Heart left ventricle (tissue), 16 donors: ENCODE measurements at regions of chr1 and their contacts with region 1.

Region 1: DNA sequence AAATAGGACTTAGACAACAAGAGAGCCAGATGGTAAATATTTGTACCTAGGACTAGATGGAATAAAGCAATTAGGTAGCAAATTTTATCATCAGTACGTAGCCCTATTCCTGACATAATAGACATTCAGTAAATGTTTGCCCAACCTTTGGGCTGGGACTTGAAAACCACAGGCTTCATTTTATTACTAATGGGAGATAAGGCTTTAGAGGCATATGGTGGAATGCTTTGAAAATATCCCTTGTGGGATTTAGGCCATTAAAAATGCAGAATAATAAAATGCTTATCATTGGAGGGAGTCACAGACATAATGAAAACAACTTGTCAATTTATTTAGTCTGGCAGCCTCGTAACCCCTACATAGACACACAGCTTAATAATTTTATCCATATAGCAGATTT is 296.1 kb upstream of the SPAG17 start:
- DNase-seq: no peak
- ATAC-seq: no peak
- H3K4me3 ChIP-seq: no peak overlapping the region
- H3K27ac ChIP-seq: no peak overlapping the region
- H3K4me1 ChIP-seq: no peaks in the 10 kb centered on the region
- H3K27me3 ChIP-seq: no peaks in the 10 kb centered on the region
- CTCF ChIP-seq: no peak
- POLR2A ChIP-seq: no peak

Region 2: GRCh38 chr1:118461154-118461553 is 20.0 kb before region 1 on chr1:
- intact Hi-C with region 1: loop called in 1 of 10 experiments (anchors 2 kb)
- DNase-seq: no peak
- ATAC-seq: no peak
- H3K4me3 ChIP-seq: no peak overlapping the region
- H3K27ac ChIP-seq: no peak overlapping the region
- H3K4me1 ChIP-seq: no peaks in the 10 kb centered on the region
- H3K27me3 ChIP-seq: no peaks in the 10 kb centered on the region
- CTCF ChIP-seq: peak in 1 of 12 donors; percentile 15
- POLR2A ChIP-seq: no peak